ENCODE measurements at regions of chr12 and their contacts with region 1.

Region 1: DNA sequence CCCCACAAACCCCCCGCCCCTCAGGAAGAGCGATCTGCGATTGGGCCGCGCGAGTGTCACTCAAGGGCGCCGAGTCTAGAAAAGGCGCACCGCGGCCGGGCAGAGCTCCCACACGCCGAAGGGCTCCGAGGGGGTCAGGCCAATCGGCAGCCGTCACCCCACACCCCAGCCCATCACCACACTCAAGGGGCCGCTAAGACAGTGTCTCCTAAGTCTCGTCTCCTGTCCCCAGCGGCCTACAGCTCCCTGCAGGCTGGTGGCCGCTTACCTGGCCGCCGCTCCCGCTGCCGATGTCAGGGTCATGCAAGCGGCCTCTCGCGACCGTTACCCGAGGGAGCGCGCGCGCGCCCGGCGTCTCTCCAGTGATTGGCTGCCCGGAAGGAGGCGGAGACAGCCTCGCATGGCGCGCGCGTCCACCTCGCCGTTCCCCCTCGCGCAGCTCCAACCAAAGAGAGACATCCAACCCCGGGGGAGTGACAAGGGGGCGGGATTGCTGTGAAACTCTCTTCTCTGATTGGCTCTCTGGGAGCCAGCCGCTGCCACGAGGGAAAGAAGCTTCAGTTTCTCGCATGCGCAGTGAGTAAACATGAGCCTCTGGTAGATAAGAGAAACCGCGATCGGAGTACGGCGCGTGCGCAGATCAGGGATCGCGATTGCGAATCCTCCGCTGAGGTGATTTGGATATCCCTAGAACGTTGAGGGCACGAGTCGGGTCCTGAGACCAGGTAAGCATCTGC is at the starts of genes MPHOSPH9 and MTRFR:
- DNase-seq: peak; percentile 97 to 100 (median 98)
- ATAC-seq: peak; percentile 87
- H3K4me3 ChIP-seq: peak within 1 kb of the TSS; percentile 97
- H3K4me3 Mint-ChIP-seq: peak within 1 kb of the TSS; percentile 95
- H3K27ac ChIP-seq: peak within 1 kb of the TSS; percentile 85 to 91
- H3K27ac Mint-ChIP-seq: peak within 1 kb of the TSS; percentile 97
- H3K4me1 ChIP-seq: peaks cover 67% of the 10 kb centered on the region
- H3K4me1 Mint-ChIP-seq: peaks cover 76% of the 10 kb centered on the region
- H3K27me3 ChIP-seq: no peaks in the 10 kb centered on the region
- H3K27me3 Mint-ChIP-seq: no peaks in the 10 kb centered on the region
- CTCF ChIP-seq: no peak
- total RNA-seq, gene MPHOSPH9: 80.9 to 84.5 TPM
- total RNA-seq, gene MTRFR: 43.2 to 44.5 TPM

Region 2: DNA sequence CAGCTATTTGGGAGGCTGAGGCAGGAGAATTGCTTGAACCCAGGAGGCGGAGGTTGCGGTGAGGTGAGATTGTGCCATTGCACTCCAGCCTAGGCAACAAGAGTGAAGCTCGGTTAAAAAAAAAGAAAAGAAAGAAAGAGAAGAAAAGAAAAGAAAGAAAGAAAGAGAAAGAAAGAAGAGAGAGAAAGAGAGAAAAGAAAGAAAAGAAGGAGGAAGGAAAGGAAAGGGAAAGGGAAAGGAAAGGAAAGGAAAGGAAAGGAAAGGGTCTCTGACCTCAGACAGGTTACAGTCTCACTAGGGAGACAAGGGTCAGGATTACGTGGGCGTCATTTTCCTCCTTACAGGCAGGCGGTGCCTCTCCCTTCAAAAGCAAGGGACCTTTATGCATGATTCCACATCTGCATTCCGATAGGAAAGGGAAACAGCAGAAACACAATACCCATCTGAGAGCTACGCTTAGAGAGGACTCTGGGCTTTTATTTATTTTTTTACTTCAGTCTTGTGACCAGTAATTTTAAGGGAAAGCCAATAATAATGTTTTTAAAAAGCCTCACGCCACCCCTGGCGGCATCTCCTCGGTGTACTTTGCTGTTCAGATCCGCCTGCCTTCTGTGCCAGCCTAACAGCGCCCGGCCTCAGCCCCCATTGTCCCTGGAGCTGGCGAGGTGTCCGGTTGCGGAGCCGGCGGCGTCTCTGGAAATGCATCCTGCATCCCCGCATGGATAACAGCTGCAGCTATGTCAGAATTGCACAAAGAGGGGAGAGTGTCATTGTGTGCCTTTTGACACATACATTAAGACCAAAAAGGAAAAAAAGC is 398.7 kb before region 1 on chr12:
- CTCF ChIA-PET with region 1: no interaction called
- POLR2A ChIA-PET with region 1: interaction called, 21 read pairs
- intact Hi-C with region 1: no loop called
- DNase-seq: peak in 5 of 14 experiments; percentile 11 to 59 (median 37)
- ATAC-seq: peak; percentile 8
- H3K4me3 ChIP-seq: peak overlapping the region; percentile 57
- H3K4me3 Mint-ChIP-seq: peak overlapping the region; percentile 98
- H3K27ac ChIP-seq: no peak overlapping the region
- H3K27ac Mint-ChIP-seq: peak overlapping the region; percentile 89
- H3K4me1 ChIP-seq: peaks cover 24% of the 10 kb centered on the region
- H3K4me1 Mint-ChIP-seq: peaks cover 41% of the 10 kb centered on the region
- H3K27me3 ChIP-seq: no peaks in the 10 kb centered on the region
- H3K27me3 Mint-ChIP-seq: no peaks in the 10 kb centered on the region
- CTCF ChIP-seq: no peak

Region 3: GRCh38 chr12:122974274-122974891 is 258.6 kb before region 1 on chr12:
- CTCF ChIA-PET with region 1: interaction called, 4 read pairs
- POLR2A ChIA-PET with region 1: interaction called, 58 read pairs
- intact Hi-C with region 1: loop called (anchors 1 to 2 kb)
- DNase-seq: peak; percentile 97 to 99 (median 99)
- ATAC-seq: peak; percentile 81
- H3K4me3 ChIP-seq: peak overlapping the region; percentile 97
- H3K4me3 Mint-ChIP-seq: peak overlapping the region; percentile 98
- H3K27ac ChIP-seq: peak overlapping the region; percentile 99 to 100
- H3K27ac Mint-ChIP-seq: peak overlapping the region; percentile 98
- H3K4me1 ChIP-seq: peaks cover 49% of the 10 kb centered on the region
- H3K4me1 Mint-ChIP-seq: peaks cover 29% of the 10 kb centered on the region
- H3K27me3 ChIP-seq: no peaks in the 10 kb centered on the region
- H3K27me3 Mint-ChIP-seq: no peaks in the 10 kb centered on the region
- CTCF ChIP-seq: no peak

Region 4: DNA sequence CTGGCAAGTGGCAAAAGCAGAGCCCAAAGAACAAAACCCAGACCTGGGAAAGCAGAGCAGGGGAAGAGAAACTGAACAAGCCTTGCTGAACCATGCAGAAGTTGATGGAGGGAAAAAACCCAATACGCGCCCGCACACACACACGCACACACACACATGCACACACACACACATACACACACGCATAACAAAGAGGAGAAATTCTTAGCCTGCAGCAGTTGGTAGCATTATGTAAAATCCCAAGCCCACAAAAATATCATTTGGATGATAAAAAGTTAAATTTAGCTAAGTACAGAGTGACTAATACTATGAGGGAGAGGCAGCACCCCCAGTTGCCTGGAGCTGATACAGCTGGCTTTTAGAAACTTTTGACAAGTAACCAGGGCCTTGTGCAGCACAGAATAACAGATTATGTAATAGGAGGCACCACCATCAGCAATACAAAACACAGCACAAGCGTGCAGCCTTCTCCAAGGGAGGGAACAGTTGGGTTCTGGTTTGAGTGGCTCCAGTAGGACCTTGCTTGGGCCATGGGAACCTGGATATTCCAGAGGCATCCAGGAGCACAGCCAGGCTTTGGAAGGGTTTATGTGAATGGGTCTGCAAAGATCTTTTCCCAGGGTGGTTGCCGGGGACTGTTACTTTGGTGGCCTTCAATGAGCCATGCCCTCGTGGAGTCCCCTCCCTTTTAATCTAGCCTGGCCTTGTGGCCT is 117.4 kb before region 1 on chr12:
- CTCF ChIA-PET with region 1: interaction called, 3 read pairs
- POLR2A ChIA-PET with region 1: interaction called, 24 read pairs
- intact Hi-C with region 1: no loop called
- DNase-seq: peak in 7 of 14 experiments; percentile 20 to 64 (median 44)
- ATAC-seq: peak; percentile 89
- H3K4me3 ChIP-seq: no peak overlapping the region
- H3K4me3 Mint-ChIP-seq: peak overlapping the region; percentile 66
- H3K27ac ChIP-seq: peak overlapping the region; percentile 30 to 64
- H3K27ac Mint-ChIP-seq: peak overlapping the region; percentile 99
- H3K4me1 ChIP-seq: peaks cover 53% of the 10 kb centered on the region
- H3K4me1 Mint-ChIP-seq: peaks cover 80% of the 10 kb centered on the region
- H3K27me3 ChIP-seq: no peaks in the 10 kb centered on the region
- H3K27me3 Mint-ChIP-seq: no peaks in the 10 kb centered on the region
- CTCF ChIP-seq: no peak

Region 5: GRCh38 chr12:123250484-123251383 is 17.8 kb after region 1 on chr12:
- CTCF ChIA-PET with region 1: interaction called, 12 read pairs
- POLR2A ChIA-PET with region 1: interaction called, 21 read pairs
- intact Hi-C with region 1: no loop called
- DNase-seq: no peak
- ATAC-seq: no peak
- H3K4me3 ChIP-seq: no peak overlapping the region
- H3K4me3 Mint-ChIP-seq: no peak overlapping the region
- H3K27ac ChIP-seq: no peak overlapping the region
- H3K27ac Mint-ChIP-seq: peak overlapping the region; percentile 36
- H3K4me1 ChIP-seq: peaks cover 33% of the 10 kb centered on the region
- H3K4me1 Mint-ChIP-seq: peaks cover 58% of the 10 kb centered on the region
- H3K27me3 ChIP-seq: no peaks in the 10 kb centered on the region
- H3K27me3 Mint-ChIP-seq: no peaks in the 10 kb centered on the region
- CTCF ChIP-seq: no peak

Region 6: DNA sequence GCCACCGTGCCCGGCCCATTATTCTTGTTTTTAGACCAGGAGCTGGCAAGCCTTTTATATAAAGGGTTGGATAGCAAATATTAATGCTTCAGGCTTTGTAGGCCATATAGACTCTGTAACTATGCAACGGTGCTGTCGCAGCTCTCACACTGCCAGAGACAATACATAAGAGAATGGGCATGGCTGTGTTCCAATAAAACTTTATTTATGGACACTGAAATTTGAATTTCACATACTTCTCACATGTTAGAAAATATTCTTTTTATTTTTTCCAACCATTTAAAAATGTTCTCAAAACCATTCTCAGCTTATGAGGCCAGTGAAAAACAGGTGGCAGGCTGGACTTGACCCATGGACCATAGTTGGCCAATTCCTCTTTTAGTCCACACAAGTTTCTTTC is 51.7 kb after region 1 on chr12:
- CTCF ChIA-PET with region 1: no interaction called
- POLR2A ChIA-PET with region 1: no interaction called
- intact Hi-C with region 1: no loop called
- DNase-seq: no peak
- ATAC-seq: no peak
- H3K4me3 ChIP-seq: no peak overlapping the region
- H3K4me3 Mint-ChIP-seq: no peak overlapping the region
- H3K27ac ChIP-seq: no peak overlapping the region
- H3K27ac Mint-ChIP-seq: no peak overlapping the region
- H3K4me1 ChIP-seq: no peaks in the 10 kb centered on the region
- H3K4me1 Mint-ChIP-seq: no peaks in the 10 kb centered on the region
- H3K27me3 ChIP-seq: no peaks in the 10 kb centered on the region
- H3K27me3 Mint-ChIP-seq: no peaks in the 10 kb centered on the region
- CTCF ChIP-seq: no peak